ENCODE measurements at regions of chr7 and their contacts with region 1.

Region 1: GRCh38 chr7:76314042-76314721 is 11.7 kb downstream of the HSPB1 start:
- DNase-seq: peak; percentile 98
- ATAC-seq: peak; percentile 59
- H3K4me3 Mint-ChIP-seq: no peak overlapping the region
- H3K27ac Mint-ChIP-seq: peak overlapping the region; percentile 77
- H3K4me1 Mint-ChIP-seq: peaks cover 20% of the 10 kb centered on the region
- H3K27me3 Mint-ChIP-seq: no peaks in the 10 kb centered on the region

Region 2: GRCh38 chr7:76166404-76167255 is 147.6 kb before region 1 on chr7:
- CTCF ChIA-PET with region 1: interaction called, 28 read pairs
- DNase-seq: peak; percentile 96
- ATAC-seq: peak; percentile 97
- H3K4me3 Mint-ChIP-seq: peak overlapping the region; percentile 83
- H3K27ac Mint-ChIP-seq: peak overlapping the region; percentile 89
- H3K4me1 Mint-ChIP-seq: peaks cover 9% of the 10 kb centered on the region
- H3K27me3 Mint-ChIP-seq: no peaks in the 10 kb centered on the region

Region 3: GRCh38 chr7:76262683-76263402 is 51.3 kb before region 1 on chr7:
- CTCF ChIA-PET with region 1: interaction called, 26 read pairs
- DNase-seq: peak; percentile 61
- ATAC-seq: peak; percentile 41
- H3K4me3 Mint-ChIP-seq: no peak overlapping the region
- H3K27ac Mint-ChIP-seq: no peak overlapping the region
- H3K4me1 Mint-ChIP-seq: peaks cover 3% of the 10 kb centered on the region
- H3K27me3 Mint-ChIP-seq: peaks cover 20% of the 10 kb centered on the region

Region 4: GRCh38 chr7:76291343-76292212 is 22.6 kb before region 1 on chr7:
- CTCF ChIA-PET with region 1: interaction called, 344 read pairs
- DNase-seq: peak; percentile 94
- ATAC-seq: peak; percentile 96
- H3K4me3 Mint-ChIP-seq: peak overlapping the region; percentile 0
- H3K27ac Mint-ChIP-seq: peak overlapping the region; percentile 84
- H3K4me1 Mint-ChIP-seq: peaks cover 23% of the 10 kb centered on the region
- H3K27me3 Mint-ChIP-seq: no peaks in the 10 kb centered on the region

Region 5: GRCh38 chr7:76359111-76359978 is 45.2 kb after region 1 on chr7:
- CTCF ChIA-PET with region 1: interaction called, 12 read pairs
- DNase-seq: peak; percentile 97
- ATAC-seq: peak; percentile 96
- H3K4me3 Mint-ChIP-seq: peak overlapping the region; percentile 92
- H3K27ac Mint-ChIP-seq: peak overlapping the region; percentile 96
- H3K4me1 Mint-ChIP-seq: peaks cover 49% of the 10 kb centered on the region
- H3K27me3 Mint-ChIP-seq: no peaks in the 10 kb centered on the region

Measured in activated CD8-positive, alpha-beta memory T cell treated with anti-CD3 and anti-CD28 coated beads, Interleukin-2, amount 10 ng/mL, durations not matched to agents 7 days and 5 days (primary cell).